ENCODE measurements at regions of chr3 and their contacts with region 1.

Region 1: DNA sequence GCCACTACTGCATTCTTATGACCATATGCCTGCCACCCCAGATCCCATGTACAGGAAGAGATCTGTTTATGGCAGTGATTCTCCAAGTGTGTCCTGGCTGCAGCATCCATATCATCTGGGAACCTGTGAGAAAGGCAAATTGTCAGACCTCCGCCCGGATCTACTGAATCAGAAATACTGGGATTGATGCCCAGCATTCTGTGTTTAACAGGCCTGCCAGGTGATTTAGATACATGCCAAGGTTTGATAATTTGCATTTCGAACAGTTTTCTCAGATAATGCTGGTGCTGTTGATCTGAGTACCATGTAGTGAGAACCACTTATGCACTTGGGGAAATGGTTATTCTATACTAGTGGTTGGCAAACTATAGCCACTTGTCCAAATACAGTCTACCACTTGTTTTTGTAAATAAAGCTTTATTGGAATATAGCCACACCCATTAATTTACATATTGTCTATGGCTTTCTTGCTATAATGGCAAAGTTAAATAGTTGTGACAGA is 165.4 kb downstream of the SSR3 start:
- DNase-seq: no peak
- H3K4me3 ChIP-seq: no peak overlapping the region
- H3K27ac ChIP-seq: no peak overlapping the region
- H3K4me1 ChIP-seq: no peaks in the 10 kb centered on the region
- H3K27me3 ChIP-seq: peaks cover 4% of the 10 kb centered on the region; the same call in 1 of the 2 replicates
- CTCF ChIP-seq: no peak

Region 2: DNA sequence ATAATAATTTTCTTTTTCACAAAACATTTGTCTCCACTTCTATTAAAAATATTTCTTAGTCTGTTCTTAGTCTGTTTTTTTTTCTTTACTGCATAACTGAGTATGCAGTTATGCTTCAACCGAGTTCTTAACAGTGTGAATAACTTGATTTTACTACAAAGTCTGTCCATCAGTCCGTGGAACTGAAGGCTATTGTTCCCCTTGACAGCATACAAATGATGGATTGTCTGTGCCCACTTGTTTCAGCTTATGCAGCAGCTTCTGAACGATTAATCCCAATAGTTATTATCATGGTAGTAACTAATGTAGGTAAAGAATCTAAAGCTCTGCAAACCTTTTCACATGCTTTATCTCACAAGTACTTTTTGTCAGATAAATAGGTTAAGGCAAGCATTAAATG is 14.7 kb after region 1 on chr3:
- CTCF ChIA-PET with region 1: no interaction called
- POLR2A ChIA-PET with region 1: interaction called, 13 read pairs
- intact Hi-C with region 1: no loop called
- DNase-seq: no peak
- H3K4me3 ChIP-seq: no peak overlapping the region
- H3K27ac ChIP-seq: no peak overlapping the region
- H3K4me1 ChIP-seq: no peaks in the 10 kb centered on the region
- H3K27me3 ChIP-seq: no peaks in the 10 kb centered on the region
- CTCF ChIP-seq: no peak